ENCODE measurements at regions of chr2 and their contacts with region 1.

Region 1: GRCh38 chr2:151261231-151261976 is at the start of gene RBM43:
- DNase-seq: peak; percentile 86 to 91
- ATAC-seq: peak; percentile 93 to 98 (median 96)
- H3K4me3 ChIP-seq: peak within 1 kb of the TSS; percentile 53 to 97 (median 90)
- H3K27ac ChIP-seq: peak within 1 kb of the TSS; percentile 86 to 99 (median 94)
- H3K4me1 ChIP-seq: peaks cover 0 to 25% (median 12%) of the 10 kb centered on the region in 9 donors
- H3K27me3 ChIP-seq: no peaks in the 10 kb centered on the region
- CTCF ChIP-seq: peak in 1 of 9 donors; percentile 21
- total RNA-seq, gene RBM43: 0.96 to 2.9 (median 1.8) TPM

Region 2: DNA sequence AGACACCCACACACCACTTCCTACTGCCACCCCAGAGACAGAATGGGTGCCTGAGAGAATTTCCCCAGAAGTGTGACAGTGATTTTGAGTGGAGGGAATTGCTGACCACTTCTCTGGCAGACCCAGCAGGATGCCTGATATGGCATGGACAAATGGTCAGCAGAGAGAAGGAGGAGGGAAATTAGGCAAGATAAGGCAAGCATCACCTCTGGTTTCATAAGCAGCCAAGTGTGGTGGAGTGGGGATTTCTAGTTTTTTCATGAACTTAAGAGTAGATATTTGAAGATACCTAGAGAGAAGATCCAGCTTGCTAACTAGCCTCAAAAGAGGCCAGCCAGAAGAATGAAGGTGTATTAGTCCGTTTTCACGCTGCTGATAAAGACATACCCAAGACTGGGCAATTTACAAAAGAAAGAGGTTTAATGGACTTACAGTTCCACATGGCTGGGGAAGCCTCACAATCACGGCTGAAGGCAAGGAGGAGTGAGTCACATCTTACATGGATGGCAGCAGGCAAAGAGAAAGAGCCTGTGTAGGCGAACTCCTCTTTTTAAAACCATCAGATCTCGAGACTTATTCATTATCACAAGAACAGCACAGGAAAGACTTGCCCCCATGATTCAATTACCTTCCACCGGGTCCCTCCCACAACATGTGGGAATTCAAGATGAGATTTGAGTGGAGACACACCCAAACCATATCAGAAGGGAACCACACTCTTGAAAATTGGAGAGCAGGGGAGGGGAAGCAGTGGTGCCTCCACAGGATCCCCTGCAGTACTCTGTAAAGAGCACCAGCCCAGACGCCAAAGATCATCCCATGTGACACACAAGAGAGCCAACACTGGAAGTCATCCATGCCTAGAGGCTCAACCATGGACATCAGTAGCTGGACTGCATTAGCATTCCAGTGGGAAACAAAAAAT is 64.0 kb before region 1 on chr2:
- intact Hi-C with region 1: no loop called
- DNase-seq: no peak
- ATAC-seq: no peak
- H3K4me3 ChIP-seq: no peak overlapping the region
- H3K27ac ChIP-seq: no peak overlapping the region
- H3K4me1 ChIP-seq: no peaks in the 10 kb centered on the region
- H3K27me3 ChIP-seq: no peaks in the 10 kb centered on the region
- CTCF ChIP-seq: no peak

Region 3: DNA sequence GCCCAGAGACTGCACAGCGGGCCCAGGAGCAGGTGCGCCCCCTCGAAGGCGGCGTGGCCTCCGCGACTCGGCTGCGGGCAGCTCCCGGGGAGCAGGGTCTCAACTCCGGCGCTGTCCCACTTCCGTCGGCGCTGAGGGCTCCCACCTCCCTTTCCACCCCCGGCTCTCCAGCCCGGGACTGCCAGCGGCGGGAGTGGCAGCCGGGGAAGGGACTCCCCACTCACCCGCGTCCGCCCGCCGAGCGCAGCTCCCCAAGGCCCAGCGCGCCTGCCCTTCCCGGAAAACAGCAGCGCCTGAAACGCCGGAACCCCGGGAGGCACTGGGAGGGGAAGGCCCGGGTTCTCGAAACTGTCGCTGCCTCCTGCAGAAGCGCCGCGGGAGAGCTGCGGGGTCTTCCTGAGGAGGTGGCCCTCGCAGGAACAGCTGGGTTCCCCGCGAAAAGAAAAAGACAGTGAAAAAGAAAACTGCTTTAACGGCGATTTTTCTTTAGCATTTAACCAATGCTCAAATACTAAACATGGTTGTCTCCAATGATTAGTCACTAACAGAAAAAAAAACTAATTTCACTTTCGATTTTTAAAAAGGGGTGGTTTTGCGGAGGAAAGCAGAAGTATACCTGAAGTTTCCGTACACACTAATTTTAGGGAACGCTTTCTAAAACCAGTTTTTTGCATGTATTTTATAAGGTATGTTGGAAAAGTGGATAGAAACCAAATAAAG is 28.1 kb after region 1 on chr2 and contains the start of gene NMI:
- intact Hi-C with region 1: loop called in 1 of 10 experiments (anchors 1 kb)
- DNase-seq: peak; percentile 81 to 83
- ATAC-seq: peak; percentile 90 to 96 (median 94)
- H3K4me3 ChIP-seq: peak within 1 kb of the TSS; percentile 58 to 83 (median 70)
- H3K27ac ChIP-seq: peak within 1 kb of the TSS; percentile 86 to 99 (median 95)
- H3K4me1 ChIP-seq: peaks cover 0 to 48% (median 0%) of the 10 kb centered on the region in 9 donors
- H3K27me3 ChIP-seq: no peaks in the 10 kb centered on the region
- CTCF ChIP-seq: no peak
- total RNA-seq, gene NMI: 2.3 to 12.8 (median 3.6) TPM

Region 4: DNA sequence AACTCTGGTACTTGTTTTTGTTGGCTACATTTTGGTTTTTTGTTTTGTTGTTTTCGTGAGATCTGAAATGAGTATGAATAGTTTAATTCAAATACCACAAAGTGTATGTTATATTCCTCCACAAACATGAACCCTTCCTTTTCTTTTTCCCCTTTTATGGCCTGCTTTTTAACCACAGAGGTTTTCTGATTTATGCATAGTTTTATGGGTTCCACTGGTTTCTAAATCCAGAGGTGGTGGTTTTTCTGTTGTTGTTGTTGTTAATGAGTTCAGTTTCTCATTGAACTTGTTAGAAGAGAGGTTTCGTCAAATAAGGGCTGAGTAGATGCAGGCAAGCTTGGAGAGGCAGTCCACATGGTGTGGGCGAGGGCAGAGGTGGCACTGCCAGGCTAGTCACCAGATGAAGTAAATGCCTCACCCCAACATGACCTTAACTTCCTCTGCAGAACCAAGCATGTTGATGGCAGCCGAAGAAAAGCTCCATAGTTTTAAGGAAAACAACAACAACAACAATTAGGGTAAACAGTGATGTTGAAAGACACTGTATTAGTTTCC is 220.8 kb after region 1 on chr2:
- intact Hi-C with region 1: no loop called
- DNase-seq: no peak
- ATAC-seq: no peak
- H3K4me3 ChIP-seq: no peak overlapping the region
- H3K27ac ChIP-seq: no peak overlapping the region
- H3K4me1 ChIP-seq: no peaks in the 10 kb centered on the region
- H3K27me3 ChIP-seq: no peaks in the 10 kb centered on the region
- CTCF ChIP-seq: no peak